Right lobe of liver (tissue), 6 donors: ENCODE measurements at regions of chr1 and their contacts with region 1.

Region 1: GRCh38 chr1:209576798-209577197 is 6.7 kb upstream of the CAMK1G start:
- DNase-seq: peak; percentile 83 to 86 (median 83)
- ATAC-seq: peak; percentile 99 to 100 (median 100)
- H3K4me3 ChIP-seq: no peak overlapping the region
- H3K27ac ChIP-seq: no peak overlapping the region
- H3K4me1 ChIP-seq: peaks cover 0 to 2% (median 0%) of the 10 kb centered on the region in 4 donors
- H3K27me3 ChIP-seq: no peaks in the 10 kb centered on the region
- CTCF ChIP-seq: peak; percentile 94 to 98 (median 98)
- POLR2A ChIP-seq: no peak

Region 2: GRCh38 chr1:209627732-209628196 is 51.0 kb after region 1 on chr1:
- intact Hi-C with region 1: loop called in 1 of 2 experiments (anchors 10 kb)
- DNase-seq: peak; percentile 85 to 95 (median 93)
- ATAC-seq: peak; percentile 92 to 96 (median 94)
- H3K4me3 ChIP-seq: peak overlapping the region; percentile 12 to 57 (median 40)
- H3K27ac ChIP-seq: peak overlapping the region; percentile 26 to 83 (median 42)
- H3K4me1 ChIP-seq: peaks cover 0 to 31% (median 11%) of the 10 kb centered on the region in 4 donors
- H3K27me3 ChIP-seq: no peaks in the 10 kb centered on the region
- CTCF ChIP-seq: peak; percentile 96 to 100 (median 98)
- POLR2A ChIP-seq: peak; percentile 39